ENCODE measurements at regions of chr9 and their contacts with region 1.

Region 1: DNA sequence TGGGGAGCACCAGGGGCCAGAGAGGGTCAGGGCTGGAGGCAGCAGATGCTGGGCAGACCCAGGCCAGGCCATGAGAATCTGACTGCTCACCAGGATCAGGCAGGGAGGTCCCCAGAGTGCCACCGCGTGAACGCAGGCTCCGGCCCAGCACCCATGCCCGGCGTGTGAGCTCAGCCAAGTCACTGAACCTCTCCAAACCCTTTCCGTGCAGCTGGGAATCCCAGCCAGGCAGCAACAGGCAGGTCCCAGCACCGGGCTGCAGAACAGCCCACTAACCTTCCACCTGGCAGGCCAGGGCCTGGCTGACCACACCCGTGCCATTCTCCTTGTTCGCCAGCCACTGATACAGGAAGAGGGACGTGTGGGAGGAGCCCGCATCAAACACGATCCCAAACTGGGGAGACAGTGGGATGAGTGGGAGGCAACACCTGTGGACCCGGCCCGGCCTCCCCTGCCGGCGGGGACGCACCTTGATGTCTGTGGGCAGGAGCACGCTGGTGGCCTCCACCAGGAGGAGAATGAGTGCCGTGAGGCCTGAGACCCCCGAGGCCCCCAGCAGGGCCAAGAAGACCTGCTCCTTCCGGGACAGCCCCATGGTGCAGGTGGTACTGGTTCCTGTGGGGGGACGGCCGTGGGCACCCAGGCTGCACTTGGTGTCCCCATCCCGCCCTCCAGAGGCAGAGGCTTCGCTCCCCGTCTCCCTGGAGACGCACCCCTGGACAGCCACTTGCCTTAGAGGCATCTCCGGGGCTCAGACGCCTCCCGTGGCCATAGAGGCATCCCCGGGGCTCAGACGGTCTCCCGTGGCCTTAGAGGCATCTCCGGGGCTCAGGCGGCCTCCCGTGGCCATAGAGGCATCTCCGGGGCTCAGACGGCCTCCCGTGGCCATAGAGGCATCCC is 3.2 kb downstream of the ENTPD8 start:
- DNase-seq: no peak
- H3K4me3 ChIP-seq: no peak overlapping the region
- H3K27ac ChIP-seq: no peak overlapping the region
- H3K27me3 ChIP-seq: peaks cover 7% of the 10 kb centered on the region
- CTCF ChIP-seq: no peak

Region 2: GRCh38 chr9:137277329-137278041 is 160.5 kb before region 1 on chr9 and contains the start of gene TOR4A:
- CTCF ChIA-PET with region 1: no interaction called
- POLR2A ChIA-PET with region 1: interaction called, 11 read pairs
- DNase-seq: peak; percentile 54
- H3K4me3 ChIP-seq: peak within 1 kb of the TSS; percentile 77
- H3K27ac ChIP-seq: peak within 1 kb of the TSS; percentile 84
- H3K27me3 ChIP-seq: no peaks in the 10 kb centered on the region
- CTCF ChIP-seq: peak; percentile 38
- polyA plus RNA-seq, gene TOR4A: 14.1 and 18.7 TPM in 2 replicates

Measured in AG04450 (cell line).